ENCODE measurements at regions of chr17 and their contacts with region 1.

Region 1: GRCh38 chr17:58447039-58447975 is 30.0 kb upstream of the RNF43 start:
- DNase-seq: peak; percentile 85
- H3K4me3 Mint-ChIP-seq: no peak overlapping the region
- H3K27ac Mint-ChIP-seq: no peak overlapping the region
- H3K4me1 Mint-ChIP-seq: no peaks in the 10 kb centered on the region
- H3K27me3 Mint-ChIP-seq: peaks cover 35% of the 10 kb centered on the region
- CTCF ChIP-seq: peak; percentile 86

Region 2: GRCh38 chr17:58121925-58122324 is 325.4 kb before region 1 on chr17:
- CTCF ChIA-PET with region 1: no interaction called
- POLR2A ChIA-PET with region 1: no interaction called
- intact Hi-C with region 1: loop called (anchors 1 kb)
- DNase-seq: peak; percentile 57
- H3K4me3 Mint-ChIP-seq: no peak overlapping the region
- H3K27ac Mint-ChIP-seq: no peak overlapping the region
- H3K4me1 Mint-ChIP-seq: no peaks in the 10 kb centered on the region
- H3K27me3 Mint-ChIP-seq: peaks cover 63% of the 10 kb centered on the region
- CTCF ChIP-seq: peak; percentile 35

Region 3: DNA sequence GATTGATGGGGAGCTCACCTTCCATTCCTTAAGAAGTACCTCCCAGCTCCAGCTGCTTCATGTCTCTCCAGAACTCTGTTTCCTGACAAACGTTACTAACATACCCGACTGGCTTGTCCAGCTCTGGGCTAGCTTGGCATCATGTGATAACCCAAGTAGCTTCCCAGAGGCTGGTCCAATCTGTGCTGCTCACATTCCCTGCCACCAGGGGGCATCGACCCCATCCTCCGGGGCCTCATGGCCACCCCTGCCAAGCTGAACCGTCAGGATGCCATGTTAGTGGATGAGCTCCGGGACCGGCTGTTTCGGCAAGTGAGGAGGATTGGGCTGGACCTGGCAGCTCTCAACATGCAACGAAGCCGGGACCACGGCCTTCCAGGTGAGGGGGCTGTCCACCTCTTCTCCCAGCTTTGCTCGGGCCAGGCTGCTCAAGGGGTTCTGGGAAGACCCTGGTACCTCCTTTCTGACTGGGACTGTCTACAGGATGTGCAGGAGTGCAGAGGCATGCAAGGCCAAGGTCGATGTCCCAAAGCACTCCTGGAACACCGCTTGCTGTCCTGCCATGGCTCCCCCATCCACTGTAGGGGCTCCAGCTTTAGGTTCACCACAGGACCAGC is 247.2 kb before region 1 on chr17:
- CTCF ChIA-PET with region 1: no interaction called
- POLR2A ChIA-PET with region 1: no interaction called
- intact Hi-C with region 1: loop called (anchors 1 kb)
- DNase-seq: peak; percentile 47
- H3K4me3 Mint-ChIP-seq: no peak overlapping the region
- H3K27ac Mint-ChIP-seq: no peak overlapping the region
- H3K4me1 Mint-ChIP-seq: peaks cover 6% of the 10 kb centered on the region
- H3K27me3 Mint-ChIP-seq: peaks cover 38% of the 10 kb centered on the region
- CTCF ChIP-seq: peak; percentile 37

Region 4: DNA sequence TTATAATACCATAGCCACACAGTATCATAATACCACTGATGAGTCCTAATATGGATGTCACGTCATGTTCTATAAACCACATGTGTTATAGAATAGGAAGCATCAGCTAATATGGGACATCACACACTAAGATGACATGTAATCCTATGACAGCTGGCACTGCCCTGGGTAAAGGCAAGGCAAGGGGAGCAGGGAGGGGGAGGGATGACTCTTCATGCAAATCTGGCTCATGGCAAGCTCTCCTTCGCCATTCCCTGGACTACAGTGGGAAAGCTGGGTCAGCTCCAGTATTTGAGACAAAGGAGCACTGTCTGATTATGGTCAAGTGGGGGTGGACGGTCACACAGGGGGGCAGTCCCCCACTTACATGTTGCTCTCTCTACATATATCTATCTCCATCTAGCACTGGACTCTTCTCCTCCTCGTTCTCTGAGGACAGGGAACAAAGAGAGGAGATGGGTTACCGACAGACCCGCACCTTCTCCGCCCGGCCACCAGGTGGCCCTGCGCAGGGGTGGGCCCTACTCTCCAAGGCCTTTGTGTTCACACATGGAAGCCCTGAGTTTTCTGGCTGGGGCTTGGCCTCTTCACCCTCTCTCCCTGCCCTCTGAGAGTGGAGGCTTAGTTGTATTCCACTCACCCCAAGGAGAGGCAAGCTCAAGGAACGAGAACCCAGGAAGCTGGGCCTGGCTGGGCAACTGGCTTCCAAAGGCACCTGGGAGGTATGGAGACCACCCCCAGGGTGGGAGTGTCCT is 143.2 kb before region 1 on chr17:
- CTCF ChIA-PET with region 1: interaction called, 6 read pairs
- POLR2A ChIA-PET with region 1: no interaction called
- intact Hi-C with region 1: loop called (anchors 1 kb)
- DNase-seq: peak; percentile 58
- H3K4me3 Mint-ChIP-seq: no peak overlapping the region
- H3K27ac Mint-ChIP-seq: no peak overlapping the region
- H3K4me1 Mint-ChIP-seq: no peaks in the 10 kb centered on the region
- H3K27me3 Mint-ChIP-seq: peaks cover 53% of the 10 kb centered on the region
- CTCF ChIP-seq: peak; percentile 53